Posterior vena cava (tissue), 2 donors: ENCODE measurements at regions of chr1 and their contacts with region 1.

Region 1: GRCh38 chr1:230222678-230223077 is 155.6 kb downstream of the GALNT2 start:
- DNase-seq: no peak

Region 2: DNA sequence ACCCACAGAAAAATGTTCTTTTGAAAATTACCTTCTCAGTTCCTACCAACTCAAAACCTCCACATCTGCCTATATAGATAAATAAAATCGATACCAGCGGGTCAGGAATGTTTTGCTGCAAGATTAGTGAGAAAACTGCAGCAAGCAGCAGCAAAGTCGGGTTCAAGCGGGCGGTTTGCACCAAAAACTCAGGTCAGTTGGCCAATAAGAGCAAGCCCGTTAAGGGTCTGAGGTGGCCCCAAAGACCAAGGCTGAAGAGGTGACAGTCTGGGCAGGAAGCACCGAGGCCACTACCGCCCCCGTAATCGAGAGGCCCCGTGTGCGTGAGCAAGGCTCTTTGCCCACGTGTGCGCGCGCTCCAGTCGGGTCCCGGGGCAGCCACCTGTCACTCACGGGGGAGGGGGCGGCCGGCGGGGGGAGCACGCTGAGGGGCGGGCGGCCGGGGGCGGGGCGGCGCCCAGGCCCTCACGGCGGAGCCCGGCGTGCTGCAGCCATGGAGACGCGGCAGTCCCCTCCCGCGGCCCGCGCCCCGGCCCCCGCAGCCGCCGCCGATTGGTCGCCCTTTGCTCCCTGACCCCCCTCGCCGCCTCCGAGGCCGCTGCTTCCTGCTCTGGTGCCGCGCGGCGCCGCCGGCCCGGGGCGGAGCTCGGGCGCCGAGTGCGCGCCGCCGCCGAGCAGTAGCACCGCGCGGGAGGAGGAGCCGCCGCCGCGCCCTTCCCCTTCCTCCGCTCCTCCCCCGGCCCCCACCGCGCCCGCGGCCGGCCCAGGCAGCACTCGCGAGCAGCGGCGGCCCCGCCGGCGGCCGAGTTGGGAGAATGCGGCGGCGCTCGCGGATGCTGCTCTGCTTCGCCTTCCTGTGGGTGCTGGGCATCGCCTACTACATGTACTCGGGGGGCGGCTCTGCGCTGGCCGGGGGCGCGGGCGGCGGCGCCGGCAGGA is 155.9 kb before region 1 on chr1 and contains the start of gene GALNT2:
- intact Hi-C with region 1: no loop called
- DNase-seq: peak; percentile 97
- total RNA-seq, gene GALNT2: 72.6 to 79.6 TPM

Region 3: GRCh38 chr1:230268366-230269170 is 45.9 kb after region 1 on chr1:
- intact Hi-C with region 1: no loop called
- DNase-seq: peak; percentile 67

Region 4: DNA sequence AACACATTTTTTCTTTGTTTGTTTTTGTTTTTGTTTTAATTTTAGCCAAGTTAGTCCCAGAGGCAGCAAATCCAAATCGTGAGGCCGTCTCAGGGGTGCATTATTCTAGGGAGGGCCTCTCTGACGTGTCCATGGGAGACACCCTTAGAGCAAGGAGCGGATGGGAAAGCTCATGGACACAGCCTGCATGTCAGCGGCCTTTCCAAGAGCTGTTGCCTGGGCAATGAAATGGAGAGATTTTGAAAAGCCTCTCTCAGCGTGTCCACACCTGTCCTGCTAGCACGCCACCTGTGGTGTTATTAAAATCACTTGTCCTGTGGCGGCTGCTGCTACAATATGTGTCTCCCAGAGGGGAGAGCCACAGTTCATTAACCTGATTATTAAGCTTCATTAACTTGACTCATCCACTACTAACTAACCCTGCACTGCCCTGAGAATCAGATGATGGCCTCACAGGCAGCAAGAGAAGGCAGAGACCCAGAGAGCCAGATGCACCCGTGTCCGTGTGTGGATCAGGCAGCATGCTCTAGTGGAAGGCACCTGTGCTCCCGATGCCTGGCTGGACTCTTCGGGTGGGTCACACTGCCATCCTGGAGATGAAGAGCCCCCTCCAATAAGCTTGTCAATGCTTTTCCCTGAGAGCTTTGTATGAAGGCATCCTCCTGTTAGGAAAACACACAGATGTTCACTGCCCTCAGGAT is 70.2 kb after region 1 on chr1:
- intact Hi-C with region 1: no loop called
- DNase-seq: peak; percentile 24

Region 5: GRCh38 chr1:230345139-230345885 is 122.6 kb after region 1 on chr1:
- intact Hi-C with region 1: loop called in 1 of 2 experiments (anchors 5 kb)
- DNase-seq: no peak